ENCODE measurements at regions of chr2 and their contacts with region 1.

Region 1: DNA sequence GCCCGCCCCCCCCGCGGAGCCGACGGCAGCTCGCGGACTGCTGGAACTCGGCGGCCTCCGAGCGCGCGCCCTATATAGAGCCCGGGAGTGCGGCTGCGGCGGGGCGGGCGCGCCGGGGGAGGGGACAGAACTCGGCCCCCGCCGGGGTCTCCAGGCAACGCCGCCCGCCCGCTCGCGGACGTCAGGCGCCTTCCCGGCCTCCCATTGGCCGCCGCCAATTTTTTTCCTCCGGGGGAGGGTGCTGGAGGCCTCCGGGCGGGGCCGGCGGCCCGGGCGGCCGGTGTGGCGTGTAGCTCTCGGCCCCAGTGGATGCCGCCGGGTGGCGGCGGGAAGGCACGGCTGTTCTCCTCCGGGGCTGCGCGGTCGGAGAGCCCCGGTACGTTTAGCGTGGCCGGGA is at the start of gene ZFP36L2:
- DNase-seq: peak; percentile 97
- H3K4me3 ChIP-seq: peak within 1 kb of the TSS; percentile 86 to 87
- H3K27ac ChIP-seq: peak within 1 kb of the TSS; percentile 98 to 99
- H3K4me1 ChIP-seq: peaks cover 12% of the 10 kb centered on the region
- H3K27me3 ChIP-seq: no peaks in the 10 kb centered on the region
- CTCF ChIP-seq: peak in 1 of 4 experiments; percentile 46
- POLR2A ChIP-seq: peak; percentile 95
- total RNA-seq, gene ZFP36L2: 117 to 256 TPM

Region 2: GRCh38 chr2:42828487-42829425 is 397.8 kb before region 1 on chr2:
- intact Hi-C with region 1: loop called (anchors 5 kb)
- DNase-seq: peak; percentile 49
- H3K4me3 ChIP-seq: no peak overlapping the region
- H3K27ac ChIP-seq: peak overlapping the region in 1 of 2 donors; percentile 20
- H3K4me1 ChIP-seq: peaks cover under 1% of the 10 kb centered on the region
- H3K27me3 ChIP-seq: no peaks in the 10 kb centered on the region
- CTCF ChIP-seq: peak; percentile 66 to 94 (median 88)
- POLR2A ChIP-seq: no peak

Region 3: GRCh38 chr2:42944779-42945415 is 281.7 kb before region 1 on chr2:
- intact Hi-C with region 1: loop called (anchors 2 kb)
- DNase-seq: no peak
- H3K4me3 ChIP-seq: no peak overlapping the region
- H3K27ac ChIP-seq: no peak overlapping the region
- H3K4me1 ChIP-seq: no peaks in the 10 kb centered on the region
- H3K27me3 ChIP-seq: no peaks in the 10 kb centered on the region
- CTCF ChIP-seq: no peak
- POLR2A ChIP-seq: no peak

Region 4: GRCh38 chr2:42974721-42975717 is 251.5 kb before region 1 on chr2:
- intact Hi-C with region 1: loop called (anchors 2 kb)
- DNase-seq: peak; percentile 64
- H3K4me3 ChIP-seq: peak overlapping the region; percentile 18 to 29
- H3K27ac ChIP-seq: peak overlapping the region; percentile 46 to 65
- H3K4me1 ChIP-seq: no peaks in the 10 kb centered on the region
- H3K27me3 ChIP-seq: no peaks in the 10 kb centered on the region
- CTCF ChIP-seq: peak; percentile 88 to 96 (median 92)
- POLR2A ChIP-seq: no peak

Region 5: GRCh38 chr2:43484323-43484930 is 257.9 kb after region 1 on chr2:
- intact Hi-C with region 1: loop called (anchors 2 kb)
- DNase-seq: peak; percentile 34
- H3K4me3 ChIP-seq: no peak overlapping the region
- H3K27ac ChIP-seq: peak overlapping the region; percentile 67 to 69
- H3K4me1 ChIP-seq: no peaks in the 10 kb centered on the region
- H3K27me3 ChIP-seq: no peaks in the 10 kb centered on the region
- CTCF ChIP-seq: peak; percentile 28 to 92 (median 82)
- POLR2A ChIP-seq: no peak